ENCODE measurements at regions of chr2 and their contacts with region 1.

Region 1: GRCh38 chr2:62195421-62196277 is at the start of gene B3GNT2:
- DNase-seq: peak; percentile 86 to 90
- ATAC-seq: peak; percentile 87 to 94 (median 90)
- H3K4me3 ChIP-seq: peak within 1 kb of the TSS; percentile 62 to 99 (median 92)
- H3K27ac ChIP-seq: peak within 1 kb of the TSS; percentile 91 to 97 (median 95)
- H3K4me1 ChIP-seq: peaks cover 0 to 48% (median 40%) of the 10 kb centered on the region in 9 donors
- H3K27me3 ChIP-seq: no peaks in the 10 kb centered on the region
- CTCF ChIP-seq: peak in 1 of 9 donors; percentile 2
- total RNA-seq, gene B3GNT2: 11.8 to 33.5 (median 18.1) TPM

Region 2: DNA sequence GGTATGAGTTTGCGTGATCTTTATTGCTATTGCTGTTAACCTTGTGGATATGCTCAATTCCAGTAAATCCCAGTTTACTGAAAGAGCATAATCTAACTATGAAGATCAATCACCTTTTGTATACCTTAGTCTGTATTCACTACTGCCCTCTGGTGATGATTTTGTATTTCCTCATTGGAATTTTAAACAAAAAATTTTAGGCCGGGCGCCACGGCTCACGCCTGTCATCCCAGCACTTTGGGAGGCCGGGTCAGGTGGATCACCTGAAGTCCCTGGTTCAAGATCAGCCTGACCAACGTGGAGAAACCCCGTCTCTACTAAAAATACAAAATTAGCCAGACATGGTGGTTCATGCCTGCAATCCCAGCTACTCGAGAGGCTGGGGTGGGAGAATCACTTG is 285.0 kb before region 1 on chr2:
- intact Hi-C with region 1: loop called in 2 of 10 experiments (anchors 10 kb)
- DNase-seq: no peak
- ATAC-seq: no peak
- H3K4me3 ChIP-seq: no peak overlapping the region
- H3K27ac ChIP-seq: no peak overlapping the region
- H3K4me1 ChIP-seq: peaks cover 0 to 32% (median 24%) of the 10 kb centered on the region in 9 donors
- H3K27me3 ChIP-seq: no peaks in the 10 kb centered on the region
- CTCF ChIP-seq: peak in 6 of 9 donors; percentile 12 to 23 (median 20)

Region 3: DNA sequence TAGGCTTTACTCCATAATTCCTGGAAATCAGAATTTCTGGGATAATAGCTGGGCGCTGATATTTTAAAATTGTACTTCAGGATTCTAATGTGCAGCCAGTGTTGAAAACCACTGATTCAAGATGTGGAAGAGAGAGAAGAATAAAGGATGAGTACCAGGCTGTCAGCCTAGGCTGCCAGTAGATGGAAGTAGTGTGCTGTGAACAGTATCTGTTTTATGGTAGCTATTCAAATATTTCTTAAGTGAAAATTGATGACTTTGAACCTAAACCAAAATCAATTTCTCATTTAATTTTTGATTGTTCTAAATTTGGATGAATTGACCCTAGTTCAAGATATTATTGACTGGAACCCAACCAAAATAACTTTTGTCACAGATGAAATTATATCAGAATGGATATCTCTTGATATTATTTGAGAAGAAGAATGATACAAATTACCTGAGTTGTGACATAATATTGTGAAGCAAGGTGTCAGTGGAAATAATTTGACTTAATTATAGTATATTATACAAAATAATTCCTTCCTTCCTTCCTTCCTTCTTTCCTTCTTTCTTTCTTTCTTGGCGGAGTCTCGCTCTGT is 202.1 kb before region 1 on chr2:
- intact Hi-C with region 1: loop called in 4 of 10 experiments (anchors 5 to 10 kb)
- DNase-seq: peak in 1 of 2 donors; percentile 34
- ATAC-seq: peak in 7 of 8 donors; percentile 49 to 84 (median 74)
- H3K4me3 ChIP-seq: no peak overlapping the region
- H3K27ac ChIP-seq: no peak overlapping the region
- H3K4me1 ChIP-seq: peaks cover 0 to 35% (median 19%) of the 10 kb centered on the region in 9 donors
- H3K27me3 ChIP-seq: no peaks in the 10 kb centered on the region
- CTCF ChIP-seq: peak; percentile 37 to 87 (median 70)

Region 4: GRCh38 chr2:62074233-62074632 is 121.4 kb before region 1 on chr2:
- intact Hi-C with region 1: no loop called
- DNase-seq: no peak
- ATAC-seq: no peak
- H3K4me3 ChIP-seq: no peak overlapping the region
- H3K27ac ChIP-seq: no peak overlapping the region
- H3K4me1 ChIP-seq: peaks cover 0 to 9% (median 0%) of the 10 kb centered on the region in 9 donors
- H3K27me3 ChIP-seq: no peaks in the 10 kb centered on the region
- CTCF ChIP-seq: no peak

Region 5: GRCh38 chr2:62099050-62099449 is 96.6 kb before region 1 on chr2:
- intact Hi-C with region 1: no loop called
- DNase-seq: no peak
- ATAC-seq: no peak
- H3K4me3 ChIP-seq: no peak overlapping the region
- H3K27ac ChIP-seq: no peak overlapping the region
- H3K4me1 ChIP-seq: peaks cover 0 to 12% (median 0%) of the 10 kb centered on the region in 9 donors
- H3K27me3 ChIP-seq: no peaks in the 10 kb centered on the region
- CTCF ChIP-seq: no peak

Region 6: DNA sequence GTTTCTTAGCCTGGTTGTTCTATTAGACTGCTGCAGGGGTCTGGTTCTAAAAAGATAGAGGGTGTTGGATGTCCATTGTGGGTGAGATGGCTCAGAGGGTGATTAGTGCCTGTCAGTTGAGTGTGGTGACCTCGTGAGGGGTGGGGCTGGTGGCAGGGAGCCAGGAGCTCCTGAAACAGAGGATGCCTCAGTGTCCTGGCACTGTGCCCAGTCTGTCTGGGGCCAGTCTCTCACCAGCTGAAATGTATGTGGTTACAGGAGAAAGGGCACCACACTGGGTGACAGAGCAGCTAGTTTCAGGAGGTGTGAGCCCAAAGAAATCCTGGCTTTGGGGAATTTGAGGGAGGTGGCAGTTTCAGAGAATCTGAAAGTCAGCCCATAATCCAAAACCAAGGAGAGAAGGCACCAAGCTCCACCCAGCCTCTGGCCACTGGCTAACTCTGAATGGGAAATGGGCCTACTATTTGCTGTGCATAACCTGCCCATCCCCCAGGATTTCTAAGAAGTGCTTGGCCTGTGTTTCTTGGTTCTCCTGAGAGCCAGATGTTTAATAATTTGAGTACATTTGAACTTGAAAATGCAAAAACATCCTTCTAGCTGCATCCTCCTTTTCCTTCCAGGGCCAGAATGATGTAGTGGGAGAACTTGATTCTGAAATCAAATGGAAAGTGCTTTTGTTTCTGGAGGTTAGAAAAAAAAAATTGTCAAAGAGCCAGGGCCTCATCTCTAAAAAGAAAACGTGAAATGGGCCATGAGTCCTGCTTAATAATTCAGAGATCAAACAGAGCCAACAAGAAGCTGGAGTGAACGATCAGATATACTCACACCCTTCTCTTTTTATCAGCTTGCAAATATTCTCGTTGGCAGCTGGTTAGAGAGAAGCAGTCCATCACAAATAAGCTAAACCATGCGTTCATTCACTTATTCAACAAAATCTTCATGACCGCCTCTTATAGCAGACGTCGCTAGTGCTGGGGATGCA is 92.5 kb after region 1 on chr2:
- intact Hi-C with region 1: loop called in 4 of 10 experiments (anchors 5 to 10 kb)
- DNase-seq: peak; percentile 70 to 79
- ATAC-seq: peak; percentile 51 to 89 (median 74)
- H3K4me3 ChIP-seq: no peak overlapping the region
- H3K27ac ChIP-seq: peak overlapping the region in 9 of 10 donors; percentile 22 to 82 (median 58)
- H3K4me1 ChIP-seq: peaks cover 9 to 44% (median 33%) of the 10 kb centered on the region in 9 donors
- H3K27me3 ChIP-seq: no peaks in the 10 kb centered on the region
- CTCF ChIP-seq: no peak

Region 7: GRCh38 chr2:62306751-62307468 is 111.3 kb after region 1 on chr2:
- intact Hi-C with region 1: loop called in 3 of 10 experiments (anchors 5 to 10 kb)
- DNase-seq: no peak
- ATAC-seq: peak in 4 of 8 donors; percentile 10 to 31 (median 20)
- H3K4me3 ChIP-seq: no peak overlapping the region
- H3K27ac ChIP-seq: peak overlapping the region in 7 of 10 donors; percentile 37 to 64 (median 52)
- H3K4me1 ChIP-seq: peaks cover 8 to 74% (median 56%) of the 10 kb centered on the region in 9 donors
- H3K27me3 ChIP-seq: no peaks in the 10 kb centered on the region
- CTCF ChIP-seq: no peak

Region 8: GRCh38 chr2:62410015-62410453 is 214.4 kb after region 1 on chr2:
- intact Hi-C with region 1: loop called in 9 of 10 experiments (anchors 2 to 10 kb)
- DNase-seq: peak in 1 of 2 donors; percentile 32
- ATAC-seq: peak in 3 of 8 donors; percentile 29 to 47 (median 36)
- H3K4me3 ChIP-seq: no peak overlapping the region
- H3K27ac ChIP-seq: peak overlapping the region in 9 of 10 donors; percentile 15 to 83 (median 54)
- H3K4me1 ChIP-seq: peaks cover 9 to 55% (median 35%) of the 10 kb centered on the region in 9 donors
- H3K27me3 ChIP-seq: no peaks in the 10 kb centered on the region
- CTCF ChIP-seq: peak in 7 of 9 donors; percentile 30 to 69 (median 41)

Measured in heart right ventricle (tissue), 16 donors.